ENCODE measurements at regions of chr10 and their contacts with region 1.

Region 1: DNA sequence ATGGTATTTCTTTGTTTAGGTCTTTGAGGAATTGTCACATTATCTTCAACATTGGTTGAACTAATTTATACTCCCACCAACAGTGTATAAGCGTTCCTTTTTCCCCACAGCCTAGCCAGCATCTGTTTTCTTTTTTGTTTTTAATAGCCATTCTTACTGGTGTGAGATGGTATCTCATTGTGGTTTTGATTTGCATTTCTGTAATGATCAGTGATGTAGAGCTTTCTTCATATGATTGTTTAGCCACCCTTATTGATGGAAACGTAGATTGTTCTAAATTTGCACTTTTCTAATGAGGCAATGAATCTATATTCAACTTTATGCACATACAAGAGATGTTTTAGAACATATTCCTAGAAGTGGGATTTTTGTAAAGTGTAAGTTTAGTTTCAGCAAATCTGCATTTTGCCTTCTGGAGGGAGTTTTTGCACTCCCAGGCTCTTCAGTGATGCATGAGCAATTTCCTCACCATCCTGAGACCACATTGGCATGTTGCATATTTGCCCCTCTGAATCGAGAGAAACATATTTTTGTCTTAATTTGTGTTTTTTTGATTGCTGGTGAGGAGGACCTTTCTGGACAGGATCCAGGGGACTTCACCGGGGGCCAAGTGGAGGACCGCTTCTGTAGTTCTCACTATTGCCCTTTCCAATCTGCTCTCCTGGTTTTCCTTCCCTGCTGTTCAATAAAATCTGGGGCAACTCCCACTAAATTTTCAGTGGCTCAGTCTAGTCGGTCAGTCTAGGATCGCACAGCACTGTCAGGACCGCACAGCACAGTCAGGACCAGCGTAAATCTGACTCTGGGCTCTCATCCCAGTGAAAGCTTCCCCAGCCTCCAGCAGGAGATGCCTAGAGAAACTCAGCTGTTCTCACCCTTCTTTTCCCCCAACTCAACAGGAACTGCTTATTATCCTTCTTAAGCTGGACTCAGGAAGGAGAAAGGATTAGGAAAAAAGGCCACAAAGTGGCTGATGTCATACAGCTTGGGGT is 157.0 kb downstream of the PTPN20 start:
- DNase-seq: no peak
- H3K4me3 Mint-ChIP-seq: no peak overlapping the region
- H3K27ac Mint-ChIP-seq: no peak overlapping the region
- H3K4me1 Mint-ChIP-seq: peaks cover 8% of the 10 kb centered on the region
- H3K27me3 Mint-ChIP-seq: peaks cover 15% of the 10 kb centered on the region
- CTCF ChIP-seq: no peak

Region 2: DNA sequence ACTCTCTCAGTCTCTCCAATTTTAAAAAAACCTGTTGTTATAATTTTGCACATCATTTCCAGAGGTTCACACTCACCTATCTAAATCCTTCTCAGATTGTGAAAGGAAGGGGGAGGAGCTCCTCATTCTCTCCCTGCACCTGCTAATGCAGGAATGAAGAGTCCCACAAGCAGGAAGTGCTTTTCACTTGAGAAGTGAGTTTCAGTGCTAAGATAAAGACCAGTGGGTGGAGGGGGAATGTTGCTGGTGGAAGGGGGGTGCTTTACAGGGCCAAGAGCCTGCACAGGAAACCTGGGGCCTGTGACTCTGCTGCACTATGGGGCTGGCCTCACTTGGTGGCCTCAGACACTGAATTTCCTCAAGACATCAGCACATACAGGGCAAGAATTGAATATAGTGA is 19.4 kb after region 1 on chr10:
- CTCF ChIA-PET with region 1: interaction called, 10 read pairs
- intact Hi-C with region 1: no loop called
- DNase-seq: no peak
- H3K4me3 Mint-ChIP-seq: no peak overlapping the region
- H3K27ac Mint-ChIP-seq: no peak overlapping the region
- H3K4me1 Mint-ChIP-seq: peaks cover 5% of the 10 kb centered on the region
- H3K27me3 Mint-ChIP-seq: peaks cover 33% of the 10 kb centered on the region
- CTCF ChIP-seq: no peak